Activated T-helper 1 cell treated with anti-CD3 and anti-CD28 coated beads, Interleukin-12 subunit alpha, Interleukin-12 subunit beta, Interleukin-2, Interleukin-4 antibody, amounts not matched to agents 30 ng/mL and 10 ng/mL and 1 ng/mL, durations not matched to agents 14 hours and 24 hours and 36 hours (primary cell): ENCODE measurements at regions of chr10 and their contacts with region 1.

Region 1: GRCh38 chr10:117137031-117137910 is 799 bp downstream of the VAX1 start:
- DNase-seq: no peak
- H3K4me3 Mint-ChIP-seq: no peak overlapping the region
- H3K27ac Mint-ChIP-seq: peak overlapping the region; percentile 79
- H3K4me1 Mint-ChIP-seq: no peaks in the 10 kb centered on the region
- H3K27me3 Mint-ChIP-seq: peaks cover 68% of the 10 kb centered on the region

Region 2: GRCh38 chr10:117162093-117163021 is 25.1 kb after region 1 on chr10:
- intact Hi-C with region 1: loop called (anchors 1 kb)
- DNase-seq: no peak
- H3K4me3 Mint-ChIP-seq: no peak overlapping the region
- H3K27ac Mint-ChIP-seq: peak overlapping the region; percentile 79
- H3K4me1 Mint-ChIP-seq: peaks cover 8% of the 10 kb centered on the region
- H3K27me3 Mint-ChIP-seq: peaks cover 74% of the 10 kb centered on the region

Region 3: GRCh38 chr10:117552156-117552631 is 414.9 kb after region 1 on chr10:
- intact Hi-C with region 1: loop called (anchors 1 kb)
- DNase-seq: no peak
- H3K4me3 Mint-ChIP-seq: no peak overlapping the region
- H3K27ac Mint-ChIP-seq: peak overlapping the region; percentile 73
- H3K4me1 Mint-ChIP-seq: peaks cover 9% of the 10 kb centered on the region
- H3K27me3 Mint-ChIP-seq: peaks cover 80% of the 10 kb centered on the region

Region 4: DNA sequence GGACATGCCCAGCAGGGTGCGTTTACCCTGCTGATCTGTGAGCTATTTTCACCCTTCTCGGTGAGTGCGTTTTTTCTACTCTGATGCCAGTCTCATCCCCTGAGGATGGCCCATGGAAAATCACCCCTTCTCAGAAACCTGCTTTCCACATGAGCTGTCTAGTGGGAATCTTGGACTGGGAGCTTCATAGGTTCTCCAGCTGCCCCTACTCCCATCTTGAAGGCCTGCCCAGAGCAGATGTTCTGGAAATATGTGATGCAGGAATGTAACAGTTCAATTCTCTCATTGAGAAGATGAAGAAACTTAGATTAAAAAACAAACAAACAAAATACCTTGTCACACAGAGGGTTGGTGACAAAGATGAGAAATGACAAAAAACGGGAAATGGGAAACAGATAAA is 1056.4 kb after region 1 on chr10:
- intact Hi-C with region 1: no loop called
- DNase-seq: no peak
- H3K4me3 Mint-ChIP-seq: no peak overlapping the region
- H3K27ac Mint-ChIP-seq: no peak overlapping the region
- H3K4me1 Mint-ChIP-seq: no peaks in the 10 kb centered on the region
- H3K27me3 Mint-ChIP-seq: peaks cover 3% of the 10 kb centered on the region